Sciatic nerve (tissue), 2 donors: ENCODE measurements at regions of chr2 and their contacts with region 1.

Region 1: DNA sequence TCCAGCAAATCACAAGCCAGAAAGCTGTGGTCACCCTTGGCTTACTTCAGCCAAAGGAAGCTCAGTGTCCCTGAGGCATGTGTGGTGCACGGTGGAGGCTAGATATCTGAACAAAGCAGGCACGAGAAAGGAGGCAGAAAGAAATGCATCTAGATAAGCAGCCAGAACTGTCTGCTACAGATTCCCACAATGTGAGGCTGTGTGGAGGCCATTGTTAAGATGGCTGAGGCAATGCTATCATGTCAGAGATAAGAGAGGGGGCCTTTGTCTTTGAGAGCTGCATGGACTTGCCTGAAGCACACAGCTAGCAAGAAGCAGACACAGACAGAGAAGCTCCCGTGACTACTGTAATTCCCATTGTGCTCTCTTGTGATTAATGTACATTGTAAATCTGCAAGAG is 110.5 kb upstream of the LYPD6 start:
- DNase-seq: no peak
- ATAC-seq: no peak

Region 2: GRCh38 chr2:147255812-147256211 is 1964.0 kb before region 1 on chr2:
- intact Hi-C with region 1: loop called (anchors 5 kb)
- DNase-seq: no peak
- ATAC-seq: no peak

Region 3: GRCh38 chr2:149236410-149236809 is 16.6 kb after region 1 on chr2:
- intact Hi-C with region 1: no loop called
- DNase-seq: no peak
- ATAC-seq: no peak

Region 4: DNA sequence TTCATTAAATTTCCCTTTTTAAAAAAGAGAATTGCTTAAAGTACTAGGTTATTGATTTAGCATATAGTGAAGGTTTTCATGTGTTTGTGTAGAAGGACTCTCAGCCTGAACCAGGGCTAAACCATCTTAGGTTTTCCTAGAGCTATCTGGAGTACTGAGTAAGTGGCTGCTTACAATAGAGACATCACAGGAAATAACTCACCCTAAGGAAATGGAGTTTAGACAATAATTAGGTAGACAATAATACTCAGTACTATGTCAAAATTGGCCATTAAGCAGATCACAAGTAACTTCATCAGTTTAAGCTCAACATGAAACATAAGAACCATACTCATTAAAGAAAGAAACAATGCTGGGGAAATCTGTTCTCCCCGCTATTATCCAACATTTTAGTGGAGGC is 1027.6 kb after region 1 on chr2:
- intact Hi-C with region 1: no loop called
- DNase-seq: no peak
- ATAC-seq: no peak